Activated naive CD4-positive, alpha-beta T cell treated with anti-CD3 and anti-CD28 coated beads for 36 hours (primary cell): ENCODE measurements at regions of chr3 and their contacts with region 1.

Region 1: GRCh38 chr3:177169936-177170722 is 27.2 kb downstream of the TBL1XR1 start:
- DNase-seq: no peak
- H3K4me3 Mint-ChIP-seq: no peak overlapping the region
- H3K27ac Mint-ChIP-seq: no peak overlapping the region
- H3K4me1 Mint-ChIP-seq: peaks cover 60% of the 10 kb centered on the region
- H3K27me3 Mint-ChIP-seq: no peaks in the 10 kb centered on the region

Region 2: GRCh38 chr3:176789281-176789705 is 380.8 kb before region 1 on chr3:
- CTCF ChIA-PET with region 1: no interaction called
- intact Hi-C with region 1: no loop called
- DNase-seq: no peak
- H3K4me3 Mint-ChIP-seq: no peak overlapping the region
- H3K27ac Mint-ChIP-seq: no peak overlapping the region
- H3K4me1 Mint-ChIP-seq: no peaks in the 10 kb centered on the region
- H3K27me3 Mint-ChIP-seq: peaks cover 4% of the 10 kb centered on the region

Region 3: DNA sequence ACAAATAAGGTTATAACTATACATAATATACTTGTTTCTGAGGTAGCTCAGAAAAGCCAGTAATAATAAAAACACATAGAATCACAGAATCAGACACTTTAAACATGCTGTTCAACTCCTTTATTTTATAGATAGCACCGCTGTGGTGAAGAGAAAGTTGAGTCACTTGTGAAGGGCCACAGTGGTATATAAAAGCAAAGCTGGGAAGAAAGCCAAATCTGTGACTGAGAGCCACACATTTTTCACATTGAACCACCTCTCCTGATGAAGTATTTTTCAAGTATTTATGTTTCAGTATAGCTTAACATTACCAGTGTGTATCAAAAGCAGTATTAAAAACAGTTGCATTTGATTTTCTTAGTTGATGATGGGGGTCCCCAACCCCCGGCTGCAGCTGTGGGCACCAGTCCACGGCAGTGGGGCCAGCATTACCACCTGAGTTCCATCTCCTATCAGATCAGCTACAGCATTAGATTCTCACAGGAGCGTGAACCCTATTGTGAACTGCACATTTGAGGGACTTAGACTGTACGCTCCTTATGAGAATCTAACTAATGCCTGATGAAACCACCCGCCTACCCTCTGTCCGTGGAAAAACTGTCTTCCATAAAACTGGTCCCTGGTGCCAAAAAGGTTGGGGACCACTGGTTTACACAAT is 19.0 kb before region 1 on chr3:
- CTCF ChIA-PET with region 1: no interaction called
- intact Hi-C with region 1: loop called (anchors 2 kb)
- DNase-seq: peak; percentile 38
- H3K4me3 Mint-ChIP-seq: no peak overlapping the region
- H3K27ac Mint-ChIP-seq: no peak overlapping the region
- H3K4me1 Mint-ChIP-seq: peaks cover 54% of the 10 kb centered on the region
- H3K27me3 Mint-ChIP-seq: no peaks in the 10 kb centered on the region